MCF 10A (cell line): ENCODE measurements at regions of chr20 and their contacts with region 1.

Region 1: DNA sequence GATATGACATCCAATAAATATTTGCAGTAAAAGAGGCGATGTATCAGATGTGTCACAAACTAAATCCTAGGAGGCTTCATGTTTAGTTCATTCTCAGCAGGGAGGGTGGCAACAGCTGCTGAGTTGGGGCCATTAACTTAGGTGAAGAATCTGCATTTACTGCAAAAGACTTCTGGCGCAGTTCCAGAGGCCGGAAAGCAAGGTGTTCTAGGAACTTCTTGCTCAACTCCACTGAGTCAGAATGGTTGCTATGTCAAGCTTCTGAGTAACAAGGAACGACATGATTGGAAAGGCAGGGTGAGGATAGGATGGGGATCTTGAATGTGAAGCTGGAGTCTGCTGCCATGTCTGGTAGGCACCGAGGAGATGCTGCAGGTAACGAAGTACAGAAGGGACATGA is 11.7 kb downstream of the ADNP start:
- DNase-seq: peak; percentile 96
- H3K4me3 Mint-ChIP-seq: peak overlapping the region; percentile 55
- H3K27ac Mint-ChIP-seq: peak overlapping the region; percentile 94
- H3K4me1 Mint-ChIP-seq: peaks cover 37% of the 10 kb centered on the region
- H3K27me3 Mint-ChIP-seq: no peaks in the 10 kb centered on the region
- CTCF ChIP-seq: no peak

Region 2: DNA sequence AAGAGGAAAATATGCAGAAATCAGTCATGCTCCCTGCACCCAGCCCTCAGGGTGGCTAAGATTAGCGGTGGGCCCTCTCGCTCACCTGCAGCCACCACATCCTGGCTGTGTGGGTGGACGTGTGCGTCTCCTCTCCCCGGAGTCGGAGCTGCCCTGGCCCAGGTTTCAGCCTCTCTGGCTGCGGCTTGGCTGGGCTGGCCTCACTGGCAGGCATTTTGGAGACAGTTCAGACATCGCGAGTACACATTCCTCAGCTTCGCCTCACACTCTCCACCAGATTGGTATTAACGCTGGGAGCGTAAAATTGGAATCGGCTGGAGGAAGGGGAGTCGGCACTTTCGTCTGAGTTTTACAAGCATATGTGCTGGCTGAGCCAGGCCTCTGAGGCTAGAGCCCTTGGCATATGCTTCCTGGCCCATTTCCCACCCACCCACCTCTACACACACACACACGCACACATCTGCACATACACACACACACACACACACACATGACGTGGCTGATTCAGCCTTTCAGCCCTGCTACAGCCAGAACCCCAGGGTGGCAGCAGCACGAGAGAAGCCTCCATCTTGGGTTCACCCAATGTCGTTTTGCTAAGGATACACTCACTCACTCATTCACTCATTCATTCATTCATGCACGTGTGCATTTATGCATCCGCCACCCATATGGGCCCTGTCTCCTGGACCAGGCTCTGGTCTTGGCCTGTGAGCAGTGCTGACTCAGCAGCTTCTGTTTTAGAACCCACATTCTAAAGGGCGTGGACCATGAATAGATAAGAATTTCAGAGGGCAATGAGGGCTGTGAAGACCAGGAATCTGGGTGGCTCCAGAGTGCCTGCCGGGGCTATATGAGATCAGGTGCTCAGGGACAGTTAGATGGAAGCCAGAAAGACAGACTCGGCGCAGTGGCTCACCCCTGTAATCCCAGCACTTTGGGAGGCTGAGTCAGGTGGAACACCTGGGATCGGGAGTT is 81.7 kb before region 1 on chr20:
- CTCF ChIA-PET with region 1: interaction called, 4 read pairs
- POLR2A ChIA-PET with region 1: interaction called, 149 read pairs
- intact Hi-C with region 1: no loop called
- DNase-seq: peak; percentile 74
- H3K4me3 Mint-ChIP-seq: peak overlapping the region; percentile 47
- H3K27ac Mint-ChIP-seq: peak overlapping the region; percentile 93
- H3K4me1 Mint-ChIP-seq: peaks cover 21% of the 10 kb centered on the region
- H3K27me3 Mint-ChIP-seq: no peaks in the 10 kb centered on the region
- CTCF ChIP-seq: no peak

Region 3: GRCh38 chr20:50898475-50898874 is 21.1 kb before region 1 on chr20:
- CTCF ChIA-PET with region 1: interaction called, 7 read pairs
- POLR2A ChIA-PET with region 1: interaction called, 13 read pairs
- intact Hi-C with region 1: no loop called
- DNase-seq: no peak
- H3K4me3 Mint-ChIP-seq: no peak overlapping the region
- H3K27ac Mint-ChIP-seq: peak overlapping the region; percentile 48
- H3K4me1 Mint-ChIP-seq: peaks cover 6% of the 10 kb centered on the region
- H3K27me3 Mint-ChIP-seq: no peaks in the 10 kb centered on the region
- CTCF ChIP-seq: no peak

Region 4: GRCh38 chr20:50967586-50967985 is 48.0 kb after region 1 on chr20:
- CTCF ChIA-PET with region 1: no interaction called
- POLR2A ChIA-PET with region 1: no interaction called
- intact Hi-C with region 1: no loop called
- DNase-seq: no peak
- H3K4me3 Mint-ChIP-seq: no peak overlapping the region
- H3K27ac Mint-ChIP-seq: no peak overlapping the region
- H3K4me1 Mint-ChIP-seq: no peaks in the 10 kb centered on the region
- H3K27me3 Mint-ChIP-seq: peaks cover 11% of the 10 kb centered on the region
- CTCF ChIP-seq: no peak

Region 5: GRCh38 chr20:51272401-51272800 is 352.8 kb after region 1 on chr20:
- CTCF ChIA-PET with region 1: no interaction called
- POLR2A ChIA-PET with region 1: no interaction called
- intact Hi-C with region 1: no loop called
- DNase-seq: peak; percentile 60
- H3K4me3 Mint-ChIP-seq: no peak overlapping the region
- H3K27ac Mint-ChIP-seq: no peak overlapping the region
- H3K4me1 Mint-ChIP-seq: no peaks in the 10 kb centered on the region
- H3K27me3 Mint-ChIP-seq: peaks cover 11% of the 10 kb centered on the region
- CTCF ChIP-seq: no peak